ENCODE measurements at regions of chr12 and their contacts with region 1.

Region 1: DNA sequence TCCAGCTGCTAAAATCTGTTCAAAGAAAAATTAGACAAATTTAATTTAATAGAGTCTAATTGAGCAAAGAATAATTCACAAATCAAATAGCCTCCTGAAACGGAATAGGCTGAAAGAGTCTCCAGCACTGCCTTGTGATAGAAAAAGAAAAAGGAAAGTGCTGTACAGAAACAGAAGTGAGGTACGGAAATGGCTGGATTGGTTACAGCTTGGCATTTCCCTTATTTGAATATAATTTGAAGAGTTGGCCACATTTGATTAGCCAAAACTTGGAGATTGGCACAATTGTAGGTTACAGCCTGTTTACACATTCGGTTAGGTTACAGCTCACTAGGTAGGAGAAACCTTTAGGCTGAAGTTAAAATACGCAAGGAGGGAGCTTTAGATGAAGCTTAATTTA is 24.8 kb upstream of the PCED1B start:
- DNase-seq: no peak
- ATAC-seq: no peak
- H3K4me3 ChIP-seq: no peak overlapping the region
- H3K4me3 Mint-ChIP-seq: no peak overlapping the region
- H3K27ac ChIP-seq: no peak overlapping the region
- H3K27ac Mint-ChIP-seq: no peak overlapping the region
- H3K4me1 ChIP-seq: no peaks in the 10 kb centered on the region
- H3K4me1 Mint-ChIP-seq: no peaks in the 10 kb centered on the region
- H3K27me3 ChIP-seq: no peaks in the 10 kb centered on the region
- H3K27me3 Mint-ChIP-seq: peaks cover 2% of the 10 kb centered on the region
- CTCF ChIP-seq: no peak

Region 2: DNA sequence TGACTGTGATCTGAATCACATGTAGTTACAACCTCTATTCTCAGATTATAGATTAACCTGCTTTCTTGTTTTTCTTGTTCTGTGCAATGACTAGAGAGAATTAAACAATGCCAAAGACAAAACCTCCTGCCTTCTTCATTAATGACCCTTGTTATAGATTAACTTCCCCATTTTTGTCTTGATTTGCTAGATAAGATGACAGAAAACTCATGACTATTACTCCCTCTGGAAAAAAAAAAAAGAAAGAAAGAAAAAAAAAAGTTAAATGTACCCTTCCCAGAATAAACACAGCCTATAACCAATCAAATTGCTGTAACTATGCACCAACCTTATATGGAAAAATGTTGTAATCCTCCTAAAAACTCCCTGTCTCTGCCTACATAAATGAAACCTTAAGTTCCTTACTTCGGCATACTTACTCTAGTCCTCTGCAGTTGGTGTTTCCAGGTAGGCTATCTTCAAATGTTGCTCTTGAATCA is 16.4 kb before region 1 on chr12:
- CTCF ChIA-PET with region 1: interaction called, 5 read pairs
- POLR2A ChIA-PET with region 1: no interaction called
- intact Hi-C with region 1: loop called in 1 of 2 experiments (anchors 2 kb)
- DNase-seq: no peak
- ATAC-seq: no peak
- H3K4me3 ChIP-seq: no peak overlapping the region
- H3K4me3 Mint-ChIP-seq: no peak overlapping the region
- H3K27ac ChIP-seq: no peak overlapping the region
- H3K27ac Mint-ChIP-seq: no peak overlapping the region
- H3K4me1 ChIP-seq: no peaks in the 10 kb centered on the region
- H3K4me1 Mint-ChIP-seq: peaks cover 14% of the 10 kb centered on the region
- H3K27me3 ChIP-seq: no peaks in the 10 kb centered on the region
- H3K27me3 Mint-ChIP-seq: no peaks in the 10 kb centered on the region
- CTCF ChIP-seq: no peak